Cardiac septum (tissue), 1 donor: ENCODE measurements at regions of chr10 and their contacts with region 1.

Region 1: GRCh38 chr10:122142641-122143237 is 128.4 kb upstream of the BTBD16 start:
- DNase-seq: peak; percentile 82

Region 2: DNA sequence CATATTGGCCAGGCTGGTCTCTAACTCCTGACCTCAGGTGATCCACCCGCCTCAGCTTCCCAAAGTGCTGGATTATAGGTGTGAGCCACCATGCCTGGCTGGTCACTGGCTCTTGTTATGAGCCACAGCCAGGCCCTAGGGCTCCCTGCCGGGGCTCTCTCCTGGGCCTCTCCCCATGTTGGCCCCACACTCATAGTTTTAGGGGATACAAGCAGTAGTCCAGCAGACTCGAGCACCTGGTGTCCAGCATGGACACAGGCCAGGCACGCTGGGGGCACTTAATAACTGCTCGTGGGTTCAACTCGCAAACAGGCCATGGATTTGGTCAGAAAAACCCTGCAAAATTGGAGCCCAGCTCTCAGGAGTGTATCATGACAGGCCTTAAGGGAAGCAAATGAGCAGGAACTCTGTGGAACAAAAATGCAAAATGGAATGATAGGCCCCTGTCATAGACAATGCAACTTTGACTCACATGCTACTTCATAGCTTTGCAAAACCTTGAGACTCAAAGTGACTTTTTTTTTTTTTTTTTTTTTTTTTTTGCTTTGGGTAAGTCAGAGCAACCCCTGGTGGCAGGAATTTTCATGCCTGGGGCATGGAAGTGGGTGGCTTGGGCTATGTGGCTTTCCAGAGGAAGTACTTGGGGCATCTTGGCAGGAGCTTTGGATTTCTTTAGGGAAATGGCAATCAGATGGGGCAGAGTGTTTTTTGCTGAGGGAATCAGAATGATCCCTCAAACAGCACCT is 91.3 kb before region 1 on chr10:
- intact Hi-C with region 1: loop called (anchors 2 kb)
- DNase-seq: no peak

Region 3: DNA sequence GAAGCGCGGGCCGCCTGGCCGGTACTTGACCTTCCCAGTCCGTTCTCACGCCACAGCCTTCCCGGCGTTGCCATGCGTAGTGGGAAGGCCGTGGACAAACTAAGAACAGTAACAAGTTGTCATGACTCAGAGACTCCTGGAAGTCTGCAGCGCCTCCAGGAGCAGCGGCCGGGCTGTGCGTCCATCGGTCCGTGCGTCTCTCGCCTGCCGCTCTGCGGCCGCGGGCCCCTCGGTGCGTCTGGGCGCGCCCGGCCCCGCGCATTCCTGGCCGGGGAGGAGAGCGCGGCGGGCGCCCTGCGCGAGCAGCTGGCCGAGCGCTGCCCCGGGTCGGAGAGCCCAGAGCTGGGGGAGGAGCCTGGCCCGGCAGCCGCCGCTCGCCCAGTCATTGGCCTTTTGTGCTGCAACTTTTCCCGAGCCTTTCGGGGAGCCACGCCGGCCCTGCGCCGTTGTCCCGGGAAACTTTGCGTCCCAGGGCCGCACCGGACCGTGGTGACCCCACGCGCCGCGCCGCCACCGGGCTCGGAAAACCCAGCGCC is 30.0 kb before region 1 on chr10:
- intact Hi-C with region 1: loop called (anchors 1 kb)
- DNase-seq: peak; percentile 93

Region 4: GRCh38 chr10:122172317-122173008 is 29.7 kb after region 1 on chr10:
- intact Hi-C with region 1: loop called (anchors 2 kb)
- DNase-seq: no peak

Region 5: DNA sequence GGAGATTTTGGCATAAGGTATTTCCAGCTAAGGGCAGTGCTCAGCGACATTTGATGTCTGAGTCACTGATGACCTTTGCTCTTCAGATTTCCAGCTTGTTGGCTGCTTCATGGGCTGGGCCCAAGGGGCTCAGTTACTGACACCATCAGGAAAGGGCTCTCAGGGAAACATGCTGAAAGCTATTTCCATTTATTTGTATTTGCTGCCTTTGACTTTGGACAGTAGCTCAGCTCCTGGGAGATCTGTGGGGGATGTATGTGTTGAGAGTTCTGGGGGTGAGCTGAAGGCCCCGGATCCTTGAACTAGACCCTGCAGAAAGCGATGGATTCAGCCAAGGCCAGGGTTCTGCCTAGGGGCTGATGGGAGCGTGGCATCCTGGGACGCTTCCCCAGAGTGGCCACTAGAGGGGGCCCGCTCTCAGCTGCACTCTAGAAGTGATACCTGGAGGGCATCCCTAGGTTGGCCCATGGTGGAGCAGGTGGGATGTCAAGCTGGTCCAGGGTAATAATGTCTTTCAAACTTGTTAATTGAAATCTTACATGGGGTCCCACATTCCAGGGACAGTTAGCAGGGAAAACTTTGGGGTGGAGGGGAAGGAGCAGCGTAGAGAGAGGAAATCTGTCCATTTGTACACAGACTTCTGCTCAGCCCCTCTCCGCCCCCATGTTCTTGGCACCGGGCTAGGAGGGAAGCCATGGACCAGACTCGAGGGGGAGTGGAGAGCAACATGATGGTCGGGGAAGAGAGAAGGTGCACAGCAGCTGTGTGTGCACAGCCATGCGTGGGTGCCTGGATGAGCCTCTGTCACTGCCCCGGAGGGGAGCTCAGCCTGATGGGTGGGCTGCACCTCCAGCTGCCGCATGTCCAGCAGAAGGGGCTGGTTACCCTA is 125.4 kb after region 1 on chr10:
- intact Hi-C with region 1: loop called (anchors 5 kb)
- DNase-seq: peak; percentile 77